Aorta (tissue), 5 donors: ENCODE measurements at regions of chr11 and their contacts with region 1.

Region 1: GRCh38 chr11:13210424-13210823 is 67.2 kb upstream of the BMAL1 start:
- DNase-seq: peak; percentile 53 to 79
- ATAC-seq: peak; percentile 52
- H3K4me3 ChIP-seq: no peak overlapping the region
- H3K27ac ChIP-seq: no peak overlapping the region
- H3K4me1 ChIP-seq: no peaks in the 10 kb centered on the region
- H3K27me3 ChIP-seq: no peaks in the 10 kb centered on the region

Region 2: DNA sequence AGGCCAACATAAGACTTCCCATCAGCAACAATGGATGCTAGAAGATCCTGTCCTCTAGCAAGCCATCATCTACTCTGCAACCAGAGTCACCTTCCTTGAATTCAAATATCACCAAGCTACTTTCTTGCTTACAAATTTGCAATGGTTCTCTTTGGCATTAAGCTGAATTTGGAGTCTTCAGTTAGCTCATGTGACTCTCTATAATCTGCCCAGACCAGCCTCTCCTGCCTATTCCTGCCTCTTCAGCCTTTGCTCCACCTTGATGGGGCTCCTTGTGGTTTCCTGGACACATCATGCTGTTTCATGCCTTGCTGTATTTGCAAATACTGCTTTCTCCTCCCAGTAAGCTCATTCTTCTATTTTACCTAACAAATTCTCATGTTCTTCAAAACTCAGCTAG is 119.1 kb before region 1 on chr11:
- intact Hi-C with region 1: no loop called
- DNase-seq: no peak
- ATAC-seq: no peak
- H3K4me3 ChIP-seq: no peak overlapping the region
- H3K27ac ChIP-seq: no peak overlapping the region
- H3K4me1 ChIP-seq: no peaks in the 10 kb centered on the region
- H3K27me3 ChIP-seq: no peaks in the 10 kb centered on the region

Region 3: DNA sequence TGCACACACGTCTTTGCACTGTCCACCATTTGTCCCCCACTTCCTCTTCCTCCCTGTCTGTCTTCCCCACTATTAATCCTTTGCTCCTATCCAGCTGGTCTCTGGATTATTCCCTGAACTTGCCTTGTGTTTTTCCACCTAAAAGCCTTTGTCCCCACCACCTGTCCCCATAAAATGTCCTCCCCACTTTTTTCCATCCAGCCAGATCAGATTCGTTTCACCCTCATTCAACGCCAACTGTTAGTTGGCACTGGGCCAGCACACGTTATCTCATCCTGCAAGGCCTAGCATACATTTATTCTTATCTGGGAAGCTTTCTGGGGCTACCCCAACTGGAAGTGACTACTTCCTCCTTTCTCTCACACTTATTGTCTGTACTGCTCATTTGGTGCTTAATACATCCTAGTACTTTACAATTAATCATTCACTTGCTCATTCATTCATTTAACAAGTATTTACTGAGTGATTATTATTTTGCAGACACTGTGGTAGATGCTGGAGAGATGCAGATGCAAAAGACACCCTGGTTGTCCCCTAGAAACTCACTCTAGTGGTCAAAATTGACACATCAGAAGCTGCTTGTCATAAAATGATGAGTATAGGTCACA is 105.1 kb before region 1 on chr11:
- intact Hi-C with region 1: no loop called
- DNase-seq: no peak
- ATAC-seq: peak; percentile 44
- H3K4me3 ChIP-seq: no peak overlapping the region
- H3K27ac ChIP-seq: no peak overlapping the region
- H3K4me1 ChIP-seq: no peaks in the 10 kb centered on the region
- H3K27me3 ChIP-seq: no peaks in the 10 kb centered on the region

Region 4: DNA sequence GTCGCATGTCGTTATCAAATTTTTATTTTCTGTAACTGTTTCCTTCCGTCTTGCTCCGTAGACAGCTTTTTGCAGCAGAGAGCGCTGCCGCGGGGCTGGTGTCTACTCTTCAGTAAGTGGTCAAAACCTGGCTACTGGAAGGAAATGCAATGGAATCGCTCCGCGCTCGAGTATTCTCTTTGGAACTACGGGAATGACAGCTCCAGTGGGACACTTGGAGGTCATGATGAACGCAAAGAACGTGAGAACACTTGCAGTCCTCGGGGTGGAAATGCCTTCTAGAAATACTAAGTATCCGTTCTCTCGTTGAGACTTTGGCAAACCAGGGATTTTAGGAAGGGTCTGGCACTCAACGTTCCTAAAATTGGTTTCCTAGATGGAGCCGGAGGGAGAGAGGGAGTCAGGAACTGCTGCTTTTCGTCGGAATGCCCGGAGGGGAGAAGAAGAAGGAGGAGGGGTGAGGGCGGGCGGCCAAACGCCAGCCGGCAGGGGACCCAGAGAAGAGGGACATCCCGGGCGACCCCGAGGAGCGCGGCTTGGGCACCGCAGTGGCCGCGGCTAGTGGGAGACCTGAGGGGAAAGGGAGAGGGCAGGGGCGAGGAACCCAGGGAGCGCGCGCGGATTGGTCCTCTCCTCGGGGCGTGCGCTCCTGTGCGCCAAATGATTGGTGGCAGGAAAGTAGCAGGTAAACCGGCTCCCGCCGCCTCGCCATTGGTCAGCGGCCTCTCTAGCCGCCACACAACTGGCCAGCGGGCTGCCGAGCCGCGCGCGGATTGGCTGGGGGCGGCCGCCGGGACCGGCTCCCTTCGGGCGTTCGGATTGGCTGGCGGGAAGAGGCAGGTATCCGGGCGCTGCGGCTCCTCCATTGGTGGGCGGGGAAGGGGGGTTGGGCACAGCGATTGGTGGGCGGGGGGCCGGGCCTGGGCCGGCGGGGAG is 66.7 kb after region 1 on chr11:
- intact Hi-C with region 1: loop called in 1 of 2 experiments (anchors 5 kb)
- DNase-seq: peak; percentile 99
- ATAC-seq: peak; percentile 97
- H3K4me3 ChIP-seq: peak overlapping the region; percentile 73 to 80
- H3K27ac ChIP-seq: peak overlapping the region in 1 of 2 donors; percentile 72
- H3K4me1 ChIP-seq: peaks cover 0 to 5% of the 10 kb centered on the region in 2 donors
- H3K27me3 ChIP-seq: no peaks in the 10 kb centered on the region

Region 5: DNA sequence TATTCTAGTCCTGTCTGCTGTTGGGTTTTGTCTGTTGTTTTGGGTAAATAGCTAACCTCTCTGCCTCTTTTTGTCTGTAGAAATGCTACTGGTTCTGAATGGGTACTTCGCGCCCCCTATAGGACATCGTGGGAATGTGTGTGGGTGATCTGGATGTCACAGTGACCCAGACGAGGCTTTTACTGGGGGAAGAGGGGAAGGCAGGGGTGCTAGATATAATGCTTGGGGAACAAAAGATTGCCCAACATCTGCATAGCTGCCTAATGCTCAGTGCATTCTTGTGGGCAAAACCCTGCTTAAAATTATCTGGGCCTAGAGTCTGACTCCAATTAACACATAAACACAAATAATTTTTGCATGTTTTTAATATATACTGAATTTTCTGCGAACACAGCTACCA is 124.9 kb after region 1 on chr11:
- intact Hi-C with region 1: loop called in 1 of 2 experiments (anchors 2 kb)
- DNase-seq: peak in 1 of 2 donors; percentile 64
- ATAC-seq: no peak
- H3K4me3 ChIP-seq: no peak overlapping the region
- H3K27ac ChIP-seq: no peak overlapping the region
- H3K4me1 ChIP-seq: peaks cover 0 to 2% of the 10 kb centered on the region in 2 donors
- H3K27me3 ChIP-seq: no peaks in the 10 kb centered on the region

Region 6: GRCh38 chr11:13343931-13344717 is 133.7 kb after region 1 on chr11:
- intact Hi-C with region 1: loop called (anchors 2 kb)
- DNase-seq: peak in 1 of 2 donors; percentile 79
- ATAC-seq: peak; percentile 73
- H3K4me3 ChIP-seq: no peak overlapping the region
- H3K27ac ChIP-seq: no peak overlapping the region
- H3K4me1 ChIP-seq: no peaks in the 10 kb centered on the region
- H3K27me3 ChIP-seq: no peaks in the 10 kb centered on the region